Stomach (tissue), 19 donors: ENCODE measurements at regions of chr6 and their contacts with region 1.

Region 1: DNA sequence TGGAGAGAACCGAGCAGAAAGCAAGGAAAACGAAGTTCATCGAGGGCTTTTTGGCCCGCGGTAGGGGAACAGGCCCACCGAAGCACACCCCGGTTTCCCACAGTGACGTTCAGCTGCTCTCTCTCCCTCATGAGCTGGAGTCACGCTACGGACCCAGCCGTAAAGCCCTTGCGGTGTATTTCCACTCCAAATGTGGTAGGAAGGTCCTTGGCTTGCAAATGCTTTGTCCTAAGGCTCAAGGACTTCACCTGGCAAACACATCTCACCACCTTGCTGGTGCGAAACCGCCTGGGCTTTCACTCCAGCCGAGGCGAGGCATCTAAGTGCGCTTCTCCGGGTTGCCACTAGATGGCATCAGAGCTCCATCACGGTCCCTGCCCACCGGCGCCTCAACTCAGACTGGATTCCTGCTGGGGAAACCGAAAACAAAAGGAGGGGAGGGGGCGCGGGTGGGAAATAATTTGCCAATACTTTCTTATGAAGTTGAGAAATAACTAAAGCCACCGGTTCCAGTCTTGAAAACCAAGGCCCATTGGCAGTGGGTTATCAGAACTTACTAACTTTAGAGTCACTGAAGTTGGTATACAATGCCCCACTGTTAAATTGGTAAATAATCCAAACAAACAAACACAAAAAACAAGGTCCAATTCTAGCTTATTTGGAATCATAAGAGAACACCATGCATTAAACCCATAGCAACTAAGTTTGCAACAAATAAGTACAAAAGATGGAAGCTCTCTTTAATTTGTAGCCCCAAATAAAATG is 13.4 kb upstream of the FOXC1 start:
- DNase-seq: peak; percentile 69 to 86
- H3K4me3 ChIP-seq: peak overlapping the region in 2 of 4 donors; percentile 8 to 27
- H3K27ac ChIP-seq: no peak overlapping the region
- H3K4me1 ChIP-seq: peaks cover 3 to 11% (median 9%) of the 10 kb centered on the region in 4 donors
- H3K27me3 ChIP-seq: peaks cover 0 to 84% (median 43%) of the 10 kb centered on the region in 3 donors
- CTCF ChIP-seq: peak in 6 of 7 experiments; percentile 16 to 96 (median 88)
- EP300 ChIP-seq: no peak
- POLR2A ChIP-seq: no peak

Region 2: DNA sequence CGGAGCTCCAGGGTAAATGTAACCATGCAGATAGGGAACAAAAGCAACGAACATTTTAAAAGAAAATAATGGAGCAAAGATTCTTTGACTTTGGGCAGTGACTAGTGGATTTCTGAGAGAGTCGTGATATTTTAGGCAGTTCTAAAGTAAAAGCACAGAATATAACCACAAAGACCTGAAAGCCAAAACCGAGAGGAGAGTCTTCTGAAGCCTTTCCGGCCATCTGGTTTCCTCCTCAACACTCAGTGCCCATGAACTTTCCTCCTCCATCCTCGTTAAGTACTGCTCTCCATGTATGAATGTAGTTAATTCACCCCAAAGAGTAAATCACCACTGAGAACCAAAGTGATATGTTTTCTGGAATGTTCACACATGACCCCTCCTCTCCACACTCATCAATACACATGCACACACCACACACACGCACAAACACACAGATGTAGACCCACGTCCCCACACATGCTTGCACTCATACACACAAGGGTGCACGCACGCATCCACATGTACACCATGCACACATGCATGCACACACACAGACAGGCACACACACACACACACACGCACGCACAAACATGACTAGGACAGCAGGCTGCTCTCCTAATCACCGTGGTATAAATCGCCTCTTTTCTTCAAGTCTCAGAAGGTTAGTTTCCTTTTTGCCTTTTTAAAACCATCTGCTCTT is 1044.9 kb after region 1 on chr6:
- intact Hi-C with region 1: loop called (anchors 5 kb)
- DNase-seq: no peak
- H3K4me3 ChIP-seq: no peak overlapping the region
- H3K27ac ChIP-seq: no peak overlapping the region
- H3K4me1 ChIP-seq: no peaks in the 10 kb centered on the region
- H3K27me3 ChIP-seq: peaks cover 0 to 26% (median 0%) of the 10 kb centered on the region in 3 donors
- CTCF ChIP-seq: no peak
- EP300 ChIP-seq: no peak
- POLR2A ChIP-seq: no peak

Region 3: GRCh38 chr6:2749969-2750600 is 1153.8 kb after region 1 on chr6:
- intact Hi-C with region 1: loop called (anchors 10 kb)
- DNase-seq: peak; percentile 67 to 83
- H3K4me3 ChIP-seq: no peak overlapping the region
- H3K27ac ChIP-seq: no peak overlapping the region
- H3K4me1 ChIP-seq: peaks cover 0 to 21% (median 3%) of the 10 kb centered on the region in 4 donors
- H3K27me3 ChIP-seq: no peaks in the 10 kb centered on the region
- CTCF ChIP-seq: peak in 5 of 7 experiments; percentile 55 to 85 (median 77)
- EP300 ChIP-seq: no peak
- POLR2A ChIP-seq: no peak